ENCODE measurements at regions of chr2 and their contacts with region 1.

Region 1: DNA sequence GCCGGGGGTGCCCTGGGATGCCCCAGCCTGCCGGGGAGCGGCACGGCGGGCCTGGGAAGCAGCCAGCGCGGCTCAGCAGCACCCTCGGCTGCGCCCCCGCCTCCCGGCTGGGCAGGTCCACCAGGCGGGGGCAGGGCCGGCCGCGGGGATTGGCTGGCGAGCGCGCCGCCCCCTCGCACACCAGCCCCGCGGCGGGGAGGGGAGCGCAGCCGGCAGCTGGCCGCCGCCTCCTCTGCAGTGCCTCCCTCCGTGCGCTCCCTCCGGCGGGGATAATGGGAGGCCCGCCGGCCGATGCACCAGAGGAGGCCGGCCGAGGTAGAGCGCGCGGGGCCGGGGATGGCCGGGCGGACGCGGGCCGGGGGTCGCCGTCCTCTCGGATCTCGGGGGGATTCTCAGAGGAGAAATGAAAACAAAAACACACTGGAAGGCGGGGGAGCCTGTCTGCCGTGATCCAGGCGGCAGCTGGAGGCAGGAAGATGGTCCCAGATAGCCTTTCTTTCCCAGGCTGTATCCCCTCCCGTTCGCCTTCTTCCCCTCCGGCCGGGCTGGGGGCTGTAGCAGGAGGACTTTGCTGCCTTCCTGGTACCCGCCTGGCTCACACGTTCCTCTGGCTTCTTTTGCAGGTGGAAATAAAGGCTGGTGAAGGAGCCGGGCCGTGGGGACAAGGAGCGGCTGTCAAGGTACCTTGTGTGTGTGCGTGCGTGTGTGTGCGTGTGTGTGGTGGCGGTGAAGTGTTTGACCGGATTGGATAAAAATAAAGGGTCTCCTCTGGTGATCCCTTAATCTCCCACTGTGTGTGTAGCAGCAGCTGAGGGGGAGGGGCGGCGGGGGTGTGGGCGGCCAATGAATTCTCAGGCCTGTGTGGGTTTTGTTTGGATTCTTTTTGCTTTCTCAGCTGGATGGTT is 18.0 kb downstream of the TET3 start:
- DNase-seq: peak; percentile 76 to 83 (median 81)
- H3K4me3 ChIP-seq: peak overlapping the region; percentile 64
- H3K4me3 Mint-ChIP-seq: peak overlapping the region; percentile 83 to 93 (median 86)
- H3K27ac ChIP-seq: peak overlapping the region; percentile 21
- H3K27ac Mint-ChIP-seq: peak overlapping the region in 6 of 8 donors; percentile 78 to 97 (median 82)
- H3K4me1 ChIP-seq: peaks cover 35% of the 10 kb centered on the region
- H3K4me1 Mint-ChIP-seq: peaks cover 44 to 62% (median 62%) of the 10 kb centered on the region in 3 donors
- H3K27me3 ChIP-seq: no peaks in the 10 kb centered on the region
- H3K27me3 Mint-ChIP-seq: peaks cover 0 to 3% of the 10 kb centered on the region in 2 donors

Region 2: GRCh38 chr2:74020702-74021406 is 18.1 kb after region 1 on chr2:
- CTCF ChIA-PET with region 1: interaction called, 3 read pairs
- POLR2A ChIA-PET with region 1: interaction called, 10 read pairs
- DNase-seq: no peak
- H3K4me3 ChIP-seq: no peak overlapping the region
- H3K4me3 Mint-ChIP-seq: no peak overlapping the region
- H3K27ac ChIP-seq: no peak overlapping the region
- H3K27ac Mint-ChIP-seq: peak overlapping the region in 4 of 8 donors; percentile 12 to 61 (median 27)
- H3K4me1 ChIP-seq: peaks cover 40% of the 10 kb centered on the region
- H3K4me1 Mint-ChIP-seq: peaks cover 37 to 49% (median 46%) of the 10 kb centered on the region in 3 donors
- H3K27me3 ChIP-seq: no peaks in the 10 kb centered on the region
- H3K27me3 Mint-ChIP-seq: no peaks in the 10 kb centered on the region

Region 3: DNA sequence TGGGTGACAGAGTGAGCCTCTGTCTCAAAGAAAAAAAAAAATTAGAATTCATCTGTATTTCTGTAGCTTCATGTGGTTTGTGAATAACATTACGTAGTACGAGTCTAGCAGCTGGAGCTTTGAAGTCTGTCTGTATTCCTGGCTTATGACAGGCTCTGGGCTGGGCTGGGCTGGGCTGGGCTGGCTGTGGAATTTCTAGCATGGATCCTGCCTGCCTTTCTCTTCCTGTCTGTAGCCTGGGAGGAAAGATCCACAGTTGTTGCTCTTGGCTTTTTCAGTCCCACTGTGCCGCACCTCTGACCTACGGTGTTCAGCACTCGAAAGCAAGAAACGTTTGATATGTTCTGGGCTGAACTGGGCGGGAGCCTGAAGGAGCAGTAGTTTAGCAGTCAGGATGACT is 89.5 kb after region 1 on chr2:
- CTCF ChIA-PET with region 1: no interaction called
- POLR2A ChIA-PET with region 1: no interaction called
- DNase-seq: no peak
- H3K4me3 ChIP-seq: no peak overlapping the region
- H3K4me3 Mint-ChIP-seq: no peak overlapping the region
- H3K27ac ChIP-seq: no peak overlapping the region
- H3K27ac Mint-ChIP-seq: peak overlapping the region in 2 of 8 donors; percentile 36 to 86
- H3K4me1 ChIP-seq: no peaks in the 10 kb centered on the region
- H3K4me1 Mint-ChIP-seq: no peaks in the 10 kb centered on the region
- H3K27me3 ChIP-seq: no peaks in the 10 kb centered on the region
- H3K27me3 Mint-ChIP-seq: peaks cover 0 to 1% of the 10 kb centered on the region in 2 donors

Measured in CD8-positive, alpha-beta memory T cell (primary cell).